HepG2 (cell line): ENCODE measurements at regions of chr9 and their contacts with region 1.

Region 1: DNA sequence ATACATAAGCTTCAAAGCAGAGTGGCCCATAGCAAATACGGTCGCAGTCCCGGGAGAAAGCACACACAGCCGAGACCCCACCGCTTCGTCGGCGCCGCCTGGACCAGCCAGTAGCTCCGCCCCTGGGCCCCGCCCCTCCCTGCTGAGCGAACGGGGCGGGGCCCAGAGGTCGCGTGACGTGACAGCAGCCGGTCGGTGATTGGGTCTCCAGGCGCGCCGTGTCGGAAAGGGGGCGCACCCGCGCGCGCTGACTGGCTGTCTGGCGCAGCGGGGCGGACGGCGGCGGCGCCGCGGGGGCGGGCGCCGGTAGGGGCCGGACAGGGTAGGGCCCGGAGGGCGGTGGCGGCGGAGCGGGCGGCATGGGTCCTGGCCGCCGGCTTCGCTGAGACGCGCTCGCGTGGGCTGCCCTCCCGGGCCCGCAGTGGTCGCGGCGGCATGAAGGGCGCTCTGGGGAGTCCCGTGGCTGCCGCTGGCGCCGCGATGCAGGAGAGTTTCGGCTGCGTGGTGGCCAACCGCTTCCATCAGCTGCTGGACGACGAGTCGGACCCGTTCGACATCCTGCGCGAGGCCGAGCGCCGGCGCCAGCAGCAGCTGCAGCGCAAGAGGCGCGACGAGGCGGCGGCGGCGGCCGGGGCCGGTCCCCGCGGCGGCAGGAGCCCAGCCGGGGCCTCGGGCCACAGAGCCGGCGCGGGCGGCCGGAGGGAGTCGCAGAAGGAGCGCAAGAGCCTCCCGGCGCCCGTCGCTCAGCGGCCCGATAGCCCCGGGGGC is at the start of gene HABP4:
- DNase-seq: peak; percentile 87
- ATAC-seq: peak; percentile 95
- H3K4me3 ChIP-seq: peak within 1 kb of the TSS; percentile 73 to 97 (median 88)
- H3K27ac ChIP-seq: peak within 1 kb of the TSS; percentile 61
- H3K4me1 ChIP-seq: peaks cover 55% of the 10 kb centered on the region
- H3K27me3 ChIP-seq: no peaks in the 10 kb centered on the region; a peak in 1 of 5 replicates
- CTCF ChIP-seq: peak; percentile 40
- EP300 ChIP-seq: no peak
- POLR2A ChIP-seq: peak; percentile 47 to 79
- RAD21 ChIP-seq: peak; percentile 45
- total RNA-seq, gene HABP4: 14.3 and 16.9 TPM in 2 replicates

Region 2: GRCh38 chr9:96383165-96383942 is 66.7 kb before region 1 on chr9 and contains the start of gene SLC35D2:
- CTCF ChIA-PET with region 1: no interaction called
- POLR2A ChIA-PET with region 1: interaction called, 4 read pairs
- in situ Hi-C with region 1: no loop called
- intact Hi-C with region 1: loop called (anchors 2 kb)
- DNase-seq: peak; percentile 73
- ATAC-seq: peak; percentile 93
- H3K4me3 ChIP-seq: peak within 1 kb of the TSS; percentile 63 to 87 (median 72)
- H3K27ac ChIP-seq: peak within 1 kb of the TSS; percentile 95
- H3K4me1 ChIP-seq: peaks cover 85% of the 10 kb centered on the region
- H3K27me3 ChIP-seq: no peaks in the 10 kb centered on the region; a peak in 1 of 5 replicates
- CTCF ChIP-seq: no peak
- EP300 ChIP-seq: no peak
- POLR2A ChIP-seq: peak; percentile 41 to 76; a peak in 3 of 4 replicates
- RAD21 ChIP-seq: no peak
- total RNA-seq, gene SLC35D2: 59.6 and 96.2 TPM in 2 replicates

Region 3: GRCh38 chr9:96491079-96491879 is 41.2 kb after region 1 on chr9:
- CTCF ChIA-PET with region 1: no interaction called
- POLR2A ChIA-PET with region 1: interaction called, 14 read pairs
- in situ Hi-C with region 1: no loop called
- intact Hi-C with region 1: loop called (anchors 2 kb)
- DNase-seq: peak; percentile 99
- ATAC-seq: peak; percentile 90
- H3K4me3 ChIP-seq: peak overlapping the region; percentile 20 to 60 (median 36); a peak in 5 of 6 replicates
- H3K27ac ChIP-seq: peak overlapping the region; percentile 98
- H3K4me1 ChIP-seq: peaks cover 83% of the 10 kb centered on the region
- H3K27me3 ChIP-seq: no peaks in the 10 kb centered on the region
- CTCF ChIP-seq: no peak
- EP300 ChIP-seq: peak in 1 of 2 experiments; percentile 89
- POLR2A ChIP-seq: peak; percentile 72 to 95
- RAD21 ChIP-seq: peak; percentile 46; the same call in 1 of the 2 replicates

Region 4: DNA sequence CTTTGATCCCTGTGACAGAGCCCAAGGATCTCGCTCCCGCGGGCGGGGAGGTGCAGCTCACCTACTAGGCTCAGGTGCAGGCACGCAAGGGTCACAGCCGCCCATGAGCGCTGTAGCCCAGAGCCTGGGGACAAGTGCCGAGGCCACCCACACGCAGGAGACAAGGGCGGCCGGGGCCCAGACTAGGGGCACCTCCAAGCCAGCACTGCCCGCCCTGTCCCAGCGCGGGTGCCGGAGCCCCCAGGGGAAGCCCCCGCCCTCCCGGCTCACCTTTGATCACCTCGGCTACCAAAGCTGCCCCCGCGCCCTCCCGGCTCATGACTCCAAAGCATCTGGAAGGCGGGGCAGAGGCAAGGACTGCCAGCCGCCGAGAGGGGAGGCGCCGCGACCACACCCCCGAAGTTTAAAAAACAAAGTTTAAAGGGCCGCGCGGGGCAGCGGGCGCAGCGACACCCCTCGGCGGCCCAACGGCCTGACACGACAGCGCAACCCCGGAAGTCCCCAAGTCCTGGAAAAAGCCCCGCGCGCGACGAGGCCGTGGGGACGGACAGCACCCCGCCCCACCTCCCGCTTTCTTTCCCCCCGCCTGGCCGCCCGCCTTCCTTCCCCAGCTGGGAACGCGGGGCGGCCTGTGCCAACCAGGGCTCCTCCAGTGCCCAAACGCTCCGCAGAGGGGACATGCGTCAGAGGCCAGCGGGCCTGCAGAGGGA is 116.6 kb after region 1 on chr9:
- CTCF ChIA-PET with region 1: no interaction called
- POLR2A ChIA-PET with region 1: interaction called, 11 read pairs
- in situ Hi-C with region 1: no loop called
- intact Hi-C with region 1: loop called (anchors 5 kb)
- DNase-seq: peak; percentile 92
- ATAC-seq: peak; percentile 98
- H3K4me3 ChIP-seq: peak overlapping the region; percentile 85 to 97 (median 87)
- H3K27ac ChIP-seq: peak overlapping the region; percentile 99
- H3K4me1 ChIP-seq: peaks cover 78% of the 10 kb centered on the region
- H3K27me3 ChIP-seq: no peaks in the 10 kb centered on the region
- CTCF ChIP-seq: peak; percentile 83
- EP300 ChIP-seq: peak in 1 of 2 experiments; percentile 29; a peak in 3 of 4 replicates
- POLR2A ChIP-seq: peak; percentile 62 to 64
- RAD21 ChIP-seq: peak; percentile 51

Region 5: DNA sequence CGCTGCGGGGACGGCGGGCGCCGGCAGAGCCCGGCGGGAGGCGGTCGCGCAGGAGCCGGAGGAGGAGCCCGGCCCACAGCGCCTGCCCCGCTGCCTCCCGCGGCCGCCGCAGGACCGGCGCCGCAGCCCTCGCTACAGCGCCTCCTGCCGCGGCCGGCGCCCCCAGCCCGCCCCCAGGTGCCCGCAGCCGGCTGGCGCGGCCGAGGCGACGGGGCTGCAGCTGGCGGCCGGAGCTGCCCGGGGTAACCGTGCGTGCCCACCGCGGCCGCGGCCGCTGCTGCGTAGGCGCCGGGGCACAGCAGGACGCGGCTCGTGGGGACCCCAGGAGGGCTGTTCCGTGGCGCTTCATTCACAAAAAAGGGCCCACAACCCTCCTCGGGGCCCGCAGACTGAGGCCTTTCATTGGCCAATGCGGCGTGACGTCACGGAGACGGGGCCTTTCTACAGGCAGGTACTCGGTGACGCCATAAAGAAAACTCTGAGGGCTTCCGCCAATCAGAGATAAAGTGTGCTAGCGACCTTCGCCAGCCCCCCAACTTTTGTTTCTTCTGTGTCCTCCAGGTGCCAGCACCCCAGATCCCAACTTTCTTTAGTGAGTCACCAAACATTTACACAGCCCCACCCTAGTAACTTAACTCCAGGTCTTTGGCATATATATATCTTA is 169.6 kb after region 1 on chr9 and contains the start of gene CDC14B:
- CTCF ChIA-PET with region 1: no interaction called
- POLR2A ChIA-PET with region 1: interaction called, 4 read pairs
- in situ Hi-C with region 1: no loop called
- intact Hi-C with region 1: loop called (anchors 5 kb)
- DNase-seq: peak; percentile 92
- ATAC-seq: peak; percentile 74
- H3K4me3 ChIP-seq: peak within 1 kb of the TSS; percentile 85 to 89 (median 87)
- H3K27ac ChIP-seq: peak within 1 kb of the TSS; percentile 65
- H3K4me1 ChIP-seq: peaks cover 37% of the 10 kb centered on the region
- H3K27me3 ChIP-seq: no peaks in the 10 kb centered on the region; a peak in 1 of 5 replicates
- CTCF ChIP-seq: peak; percentile 17
- EP300 ChIP-seq: no peak
- POLR2A ChIP-seq: peak in 1 of 2 experiments; percentile 55; a peak in 1 of 4 replicates
- RAD21 ChIP-seq: peak; percentile 25; the same call in 1 of the 2 replicates
- total RNA-seq, gene CDC14B: 33.3 and 37.7 TPM in 2 replicates

Region 6: GRCh38 chr9:96654443-96655197 is 204.6 kb after region 1 on chr9:
- CTCF ChIA-PET with region 1: no interaction called
- POLR2A ChIA-PET with region 1: interaction called, 4 read pairs
- in situ Hi-C with region 1: loop called (anchors 10 kb)
- intact Hi-C with region 1: no loop called
- DNase-seq: peak; percentile 41
- ATAC-seq: peak; percentile 73
- H3K4me3 ChIP-seq: peak overlapping the region; percentile 81 to 86 (median 81)
- H3K27ac ChIP-seq: peak overlapping the region; percentile 86
- H3K4me1 ChIP-seq: peaks cover 32% of the 10 kb centered on the region
- H3K27me3 ChIP-seq: no peaks in the 10 kb centered on the region; a peak in 1 of 5 replicates
- CTCF ChIP-seq: peak; percentile 40
- EP300 ChIP-seq: no peak
- POLR2A ChIP-seq: peak in 1 of 2 experiments; percentile 28; a peak in 1 of 4 replicates
- RAD21 ChIP-seq: no peak

Region 7: GRCh38 chr9:97220894-97221477 is 771.0 kb after region 1 on chr9:
- CTCF ChIA-PET with region 1: no interaction called
- POLR2A ChIA-PET with region 1: no interaction called
- in situ Hi-C with region 1: no loop called
- intact Hi-C with region 1: no loop called
- DNase-seq: no peak
- ATAC-seq: no peak
- H3K4me3 ChIP-seq: no peak overlapping the region
- H3K27ac ChIP-seq: no peak overlapping the region
- H3K4me1 ChIP-seq: no peaks in the 10 kb centered on the region
- H3K27me3 ChIP-seq: no peaks in the 10 kb centered on the region
- CTCF ChIP-seq: no peak
- EP300 ChIP-seq: no peak
- POLR2A ChIP-seq: no peak
- RAD21 ChIP-seq: no peak